Activated CD4-positive, alpha-beta memory T cell treated with anti-CD3 and anti-CD28 coated beads, Interleukin-2, amount 10 ng/mL, durations not matched to agents 7 days and 5 days (primary cell): ENCODE measurements at regions of chr19 and their contacts with region 1.

Region 1: DNA sequence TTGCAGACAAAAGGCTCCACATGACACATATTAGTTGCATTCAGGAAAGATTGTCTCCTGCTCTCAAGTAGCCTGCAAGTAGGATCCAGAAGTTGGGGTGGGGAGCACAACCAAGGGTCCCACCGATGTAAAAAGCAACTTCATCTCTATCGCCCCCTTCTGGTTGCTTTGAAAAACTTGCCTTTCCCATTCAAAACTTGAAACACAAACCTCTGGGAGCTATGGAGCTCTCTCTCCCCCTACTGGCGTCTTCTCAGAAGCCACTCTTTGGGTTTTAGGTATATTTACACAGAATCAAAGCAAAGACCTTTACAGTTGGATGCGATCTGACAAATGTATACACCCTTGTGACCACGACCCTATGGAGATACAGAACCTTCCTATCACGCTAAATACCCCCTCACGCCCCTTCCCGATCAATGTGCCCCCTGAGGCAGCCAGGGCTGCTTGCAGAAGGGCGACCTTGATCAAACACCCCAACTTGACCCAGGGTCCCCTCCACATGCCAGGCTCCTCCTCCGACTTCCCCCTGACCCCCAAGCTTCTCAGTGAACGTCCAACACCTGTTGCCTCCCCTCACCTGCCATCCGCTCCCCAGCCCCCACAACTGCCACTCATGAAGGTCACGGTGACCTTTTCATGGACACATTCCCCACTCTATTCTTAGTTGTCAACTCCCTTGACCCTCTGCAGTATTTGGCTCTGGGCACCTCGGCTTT is 10.1 kb downstream of the NOSIP start:
- DNase-seq: peak; percentile 81
- H3K4me3 Mint-ChIP-seq: peak overlapping the region; percentile 48
- H3K27ac Mint-ChIP-seq: peak overlapping the region; percentile 99
- H3K4me1 Mint-ChIP-seq: peaks cover 72% of the 10 kb centered on the region
- H3K27me3 Mint-ChIP-seq: no peaks in the 10 kb centered on the region

Region 2: DNA sequence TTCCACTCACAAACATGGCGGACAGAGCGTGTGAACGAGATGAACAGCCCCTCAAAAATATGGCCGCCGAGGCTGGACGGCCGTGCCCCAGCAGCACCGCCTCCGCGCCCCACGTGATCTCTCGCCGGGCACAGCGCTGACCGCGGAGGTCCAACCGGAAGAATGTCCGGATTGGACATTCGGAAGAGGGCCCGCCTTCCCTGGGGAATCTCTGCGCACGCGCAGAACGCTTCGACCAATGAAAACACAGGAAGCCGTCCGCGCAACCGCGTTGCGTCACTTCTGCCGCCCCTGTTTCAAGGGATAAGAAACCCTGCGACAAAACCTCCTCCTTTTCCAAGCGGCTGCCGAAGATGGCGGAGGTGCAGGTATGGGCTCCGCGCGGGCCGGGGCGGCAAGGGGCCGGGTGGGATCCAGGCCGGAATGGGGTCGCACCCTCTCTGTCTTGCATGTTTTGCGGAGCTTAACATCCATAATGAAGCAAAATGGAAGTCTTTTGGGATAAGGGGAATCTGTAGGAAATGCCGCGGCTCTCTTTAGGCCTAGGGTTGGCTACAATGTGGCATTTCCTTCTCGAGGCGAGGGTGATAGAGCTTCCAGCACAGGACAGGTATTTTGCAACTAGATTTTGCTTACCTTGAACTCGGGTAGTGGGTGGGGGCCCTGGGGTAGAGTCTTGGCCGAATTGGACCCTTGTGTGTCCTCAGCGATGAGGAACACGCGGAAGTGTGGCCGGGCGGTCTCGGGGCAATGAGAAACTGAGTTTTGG is 82.8 kb before region 1 on chr19 and contains the start of gene RPL13A:
- CTCF ChIA-PET with region 1: interaction called, 6 read pairs
- POLR2A ChIA-PET with region 1: interaction called, 17 read pairs
- DNase-seq: peak; percentile 100
- H3K4me3 Mint-ChIP-seq: peak within 1 kb of the TSS; percentile 95
- H3K27ac Mint-ChIP-seq: peak within 1 kb of the TSS; percentile 87
- H3K4me1 Mint-ChIP-seq: peaks cover 50% of the 10 kb centered on the region
- H3K27me3 Mint-ChIP-seq: no peaks in the 10 kb centered on the region
- total RNA-seq, gene RPL13A: 2,417 to 2,463 TPM

Region 3: GRCh38 chr19:49502866-49503581 is 67.3 kb before region 1 on chr19:
- CTCF ChIA-PET with region 1: interaction called, 255 read pairs
- POLR2A ChIA-PET with region 1: interaction called, 18 read pairs
- DNase-seq: peak; percentile 63
- H3K4me3 Mint-ChIP-seq: no peak overlapping the region
- H3K27ac Mint-ChIP-seq: peak overlapping the region; percentile 81
- H3K4me1 Mint-ChIP-seq: peaks cover 51% of the 10 kb centered on the region
- H3K27me3 Mint-ChIP-seq: no peaks in the 10 kb centered on the region

Region 4: GRCh38 chr19:49533551-49534488 is 36.5 kb before region 1 on chr19:
- CTCF ChIA-PET with region 1: interaction called, 19 read pairs
- POLR2A ChIA-PET with region 1: interaction called, 6 read pairs
- DNase-seq: peak; percentile 85
- H3K4me3 Mint-ChIP-seq: peak overlapping the region; percentile 76
- H3K27ac Mint-ChIP-seq: peak overlapping the region; percentile 31
- H3K4me1 Mint-ChIP-seq: peaks cover 26% of the 10 kb centered on the region
- H3K27me3 Mint-ChIP-seq: peaks cover 14% of the 10 kb centered on the region

Region 5: GRCh38 chr19:49555600-49556411 is 14.5 kb before region 1 on chr19:
- CTCF ChIA-PET with region 1: interaction called, 297 read pairs
- POLR2A ChIA-PET with region 1: interaction called, 75 read pairs
- DNase-seq: peak; percentile 87
- H3K4me3 Mint-ChIP-seq: peak overlapping the region; percentile 47
- H3K27ac Mint-ChIP-seq: peak overlapping the region; percentile 91
- H3K4me1 Mint-ChIP-seq: peaks cover 81% of the 10 kb centered on the region
- H3K27me3 Mint-ChIP-seq: no peaks in the 10 kb centered on the region

Region 6: DNA sequence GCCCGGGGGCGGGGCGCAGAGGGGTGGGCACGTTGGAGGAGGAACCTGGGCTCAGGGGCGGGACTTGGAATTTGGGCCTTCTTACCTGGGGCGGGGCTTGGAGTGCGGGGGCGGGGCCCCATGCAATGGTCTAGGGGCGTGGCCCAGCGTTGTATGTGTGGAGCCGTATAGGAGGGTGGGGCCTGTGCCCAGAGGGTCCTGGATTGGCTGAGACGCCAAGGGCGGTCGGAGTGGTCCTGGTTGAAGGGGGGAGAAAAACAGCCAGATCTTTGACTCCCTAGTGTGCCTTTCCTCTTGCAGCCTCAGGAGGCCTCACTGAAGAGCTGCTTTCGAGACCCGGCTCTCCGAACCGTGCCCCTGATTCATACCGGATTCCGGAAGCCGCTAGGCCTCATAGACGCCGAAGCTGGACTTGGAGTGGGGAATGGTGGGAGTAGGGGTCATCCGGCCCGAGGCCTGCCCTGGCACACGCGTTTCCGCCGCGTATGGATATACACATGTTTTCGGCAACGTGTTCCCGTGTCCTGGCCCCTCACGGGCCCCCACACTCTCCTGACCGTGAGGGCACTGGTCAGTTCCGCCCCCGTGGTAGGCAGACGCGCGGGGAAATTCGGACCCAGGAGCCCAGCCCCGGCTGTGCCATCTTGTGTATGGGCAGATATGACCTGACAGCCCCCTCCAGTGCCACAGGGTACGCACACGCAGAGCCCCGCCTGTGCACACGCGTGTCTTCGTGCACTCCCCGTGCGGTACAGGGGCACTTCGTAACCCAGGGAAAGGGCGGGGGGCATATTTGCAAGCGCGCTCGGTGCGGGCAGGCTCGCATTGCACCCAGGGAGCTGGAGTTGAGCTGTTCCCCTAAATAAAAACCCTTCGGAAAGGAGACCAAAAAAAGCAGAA is 20.0 kb after region 1 on chr19:
- CTCF ChIA-PET with region 1: interaction called, 10 read pairs
- POLR2A ChIA-PET with region 1: interaction called, 6 read pairs
- DNase-seq: peak; percentile 97
- H3K4me3 Mint-ChIP-seq: peak overlapping the region; percentile 79
- H3K27ac Mint-ChIP-seq: peak overlapping the region; percentile 80
- H3K4me1 Mint-ChIP-seq: peaks cover 37% of the 10 kb centered on the region
- H3K27me3 Mint-ChIP-seq: peaks cover 9% of the 10 kb centered on the region